Aorta (tissue), 5 donors: ENCODE measurements at regions of chr12 and their contacts with region 1.

Region 1: GRCh38 chr12:132614861-132615578 is 3.6 kb upstream of the P2RX2 start:
- DNase-seq: peak; percentile 86 to 94
- ATAC-seq: peak; percentile 87
- H3K4me3 ChIP-seq: no peak overlapping the region
- H3K27ac ChIP-seq: no peak overlapping the region
- H3K4me1 ChIP-seq: no peaks in the 10 kb centered on the region
- H3K27me3 ChIP-seq: no peaks in the 10 kb centered on the region

Region 2: DNA sequence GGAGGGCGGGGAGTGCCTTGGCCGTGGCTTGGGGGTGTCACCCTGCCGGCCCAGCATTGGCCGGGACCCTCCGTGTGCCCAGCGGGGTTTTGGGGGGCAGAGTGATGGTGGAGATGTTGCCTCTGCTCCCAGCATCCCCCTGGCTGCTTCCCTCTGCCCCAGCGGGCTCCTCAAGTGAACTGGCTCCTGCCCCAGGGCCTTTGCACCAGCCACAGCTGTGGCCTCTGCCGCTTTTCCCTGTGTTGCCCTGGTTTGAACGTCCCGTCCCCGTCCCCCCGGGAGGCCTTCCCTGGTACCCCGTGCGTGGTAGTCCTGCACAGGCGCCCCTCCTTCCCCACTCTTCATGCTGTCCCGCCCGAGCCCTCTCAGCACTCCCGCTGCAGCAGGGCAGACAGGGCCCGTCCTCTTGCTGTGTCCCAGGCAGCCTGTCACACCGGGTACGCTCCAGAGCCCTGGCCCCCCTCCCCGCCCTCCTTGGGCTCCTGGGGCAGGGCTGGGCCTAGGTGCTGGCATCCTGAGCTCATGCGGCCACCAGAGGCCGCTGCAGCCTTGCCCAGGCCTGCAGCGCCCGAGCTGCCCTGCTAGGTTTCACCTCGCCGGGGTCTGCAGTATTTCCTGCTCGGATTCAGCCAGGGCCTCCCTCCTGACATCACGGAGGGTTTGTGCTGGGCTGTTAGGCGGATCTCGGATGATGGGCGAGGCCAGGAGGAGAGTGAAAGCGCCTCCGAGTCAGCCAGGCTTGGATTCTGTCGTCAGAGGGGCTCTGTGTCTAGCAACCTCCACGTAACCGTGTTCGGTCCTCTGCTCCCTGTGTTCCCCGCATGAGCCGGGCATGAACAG is 461.3 kb before region 1 on chr12:
- intact Hi-C with region 1: loop called (anchors 2 to 5 kb)
- DNase-seq: peak; percentile 69 to 88
- ATAC-seq: peak; percentile 91
- H3K4me3 ChIP-seq: no peak overlapping the region
- H3K27ac ChIP-seq: no peak overlapping the region
- H3K4me1 ChIP-seq: no peaks in the 10 kb centered on the region
- H3K27me3 ChIP-seq: no peaks in the 10 kb centered on the region

Region 3: GRCh38 chr12:132367071-132367851 is 247.8 kb before region 1 on chr12:
- intact Hi-C with region 1: no loop called
- DNase-seq: peak in 1 of 2 donors; percentile 68
- ATAC-seq: peak; percentile 48
- H3K4me3 ChIP-seq: no peak overlapping the region
- H3K27ac ChIP-seq: no peak overlapping the region
- H3K4me1 ChIP-seq: no peaks in the 10 kb centered on the region
- H3K27me3 ChIP-seq: no peaks in the 10 kb centered on the region

Region 4: GRCh38 chr12:132414634-132415326 is 200.2 kb before region 1 on chr12:
- intact Hi-C with region 1: loop called (anchors 2 kb)
- DNase-seq: peak; percentile 84 to 90
- ATAC-seq: peak; percentile 87
- H3K4me3 ChIP-seq: no peak overlapping the region
- H3K27ac ChIP-seq: no peak overlapping the region
- H3K4me1 ChIP-seq: no peaks in the 10 kb centered on the region
- H3K27me3 ChIP-seq: no peaks in the 10 kb centered on the region

Region 5: DNA sequence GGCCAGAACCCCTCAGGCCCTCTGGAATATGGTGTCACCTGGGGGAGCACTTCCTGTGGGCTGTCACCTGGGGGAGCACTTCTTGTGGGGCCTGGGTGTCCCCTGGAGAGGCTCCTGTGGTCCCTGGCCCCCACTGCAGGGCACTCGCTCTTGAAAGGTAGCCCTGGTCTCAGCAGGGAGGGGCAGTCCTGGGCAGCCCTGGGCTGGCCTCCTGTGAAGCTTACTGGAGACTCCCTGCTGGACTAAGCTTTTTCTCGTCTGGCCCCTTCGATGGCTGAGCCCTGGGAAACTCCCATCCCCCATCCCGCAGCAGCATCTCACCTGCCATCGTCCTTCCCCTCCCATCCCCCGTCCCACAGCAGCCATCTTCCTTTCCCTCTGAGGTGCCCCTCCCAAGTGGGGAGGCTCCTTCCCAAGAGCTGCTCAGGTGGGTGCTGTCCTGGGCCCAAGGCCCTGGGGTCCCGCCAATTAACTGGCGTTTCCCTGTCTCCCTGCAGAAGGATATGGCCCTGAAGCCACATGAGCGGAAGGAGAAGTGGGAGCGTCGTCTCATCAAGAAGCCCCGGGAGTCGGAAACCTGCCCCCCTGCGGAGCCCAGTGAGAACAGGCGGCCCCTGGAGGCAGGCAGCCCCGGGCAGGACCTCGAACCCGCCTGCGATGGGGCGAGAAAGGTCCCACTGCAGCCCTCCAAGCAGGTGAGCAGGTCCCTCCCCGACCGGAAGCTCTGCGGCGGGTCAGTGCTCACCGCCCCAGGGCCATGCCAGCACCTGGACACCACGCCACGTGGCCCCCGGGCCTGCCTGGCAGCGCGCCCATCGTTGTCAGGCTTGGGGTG is 107.1 kb before region 1 on chr12:
- intact Hi-C with region 1: no loop called
- DNase-seq: no peak
- ATAC-seq: no peak
- H3K4me3 ChIP-seq: no peak overlapping the region
- H3K27ac ChIP-seq: no peak overlapping the region
- H3K4me1 ChIP-seq: no peaks in the 10 kb centered on the region
- H3K27me3 ChIP-seq: no peaks in the 10 kb centered on the region

Region 6: DNA sequence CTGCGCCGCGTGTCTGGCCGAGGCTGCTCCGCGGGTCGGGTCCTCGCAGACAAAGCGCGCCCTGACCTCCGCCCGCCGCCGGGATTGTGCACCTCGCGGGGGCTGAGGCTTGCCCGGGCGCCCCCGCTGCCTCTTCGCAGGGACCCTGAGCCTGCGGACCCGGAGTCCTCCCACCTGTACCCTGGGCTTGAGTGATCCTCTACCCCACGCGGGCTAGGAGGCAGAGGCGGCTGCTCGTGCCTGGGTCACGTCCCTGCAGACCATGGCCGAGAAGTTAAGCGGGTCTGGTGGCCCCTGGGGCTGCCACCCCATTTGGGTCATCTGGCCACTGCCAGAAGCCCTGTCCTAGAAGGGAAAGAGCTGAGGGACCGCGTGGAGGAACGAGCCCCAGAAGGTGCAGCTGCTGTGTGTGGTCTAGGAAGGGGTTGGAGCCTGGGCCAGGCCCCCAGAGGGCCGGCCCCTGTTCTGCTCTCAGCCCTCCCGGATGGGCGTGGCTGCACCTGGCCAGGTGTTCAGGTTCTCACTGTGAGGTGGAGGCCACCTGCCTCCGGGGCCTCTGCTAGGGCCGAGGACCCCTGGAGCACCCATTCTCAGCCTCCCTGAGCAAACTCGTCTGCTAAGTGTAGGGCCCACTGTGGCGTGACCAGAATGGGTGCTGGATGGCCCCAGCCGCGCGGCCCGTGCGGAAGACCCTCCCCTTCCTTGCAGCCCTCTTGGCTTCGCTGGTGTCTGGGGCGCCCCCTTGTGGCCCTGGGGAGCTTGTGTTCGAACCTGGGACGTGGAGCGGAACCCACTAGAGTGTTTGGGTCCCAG is 54.2 kb before region 1 on chr12:
- intact Hi-C with region 1: no loop called
- DNase-seq: peak in 1 of 2 donors; percentile 88
- ATAC-seq: peak; percentile 23
- H3K4me3 ChIP-seq: no peak overlapping the region
- H3K27ac ChIP-seq: no peak overlapping the region
- H3K4me1 ChIP-seq: no peaks in the 10 kb centered on the region
- H3K27me3 ChIP-seq: no peaks in the 10 kb centered on the region